Activated T-helper 2 cell treated with anti-CD3 and anti-CD28 coated beads, Interferon-gamma antibody, Interleukin-2, Interleukin-4, amounts not matched to agents 10 μg/mL and 5 μg/mL and 100 μg/mL, durations not matched to agents 14 hours and 24 hours and 36 hours (primary cell): ENCODE measurements at regions of chr1 and their contacts with region 1.

Region 1: DNA sequence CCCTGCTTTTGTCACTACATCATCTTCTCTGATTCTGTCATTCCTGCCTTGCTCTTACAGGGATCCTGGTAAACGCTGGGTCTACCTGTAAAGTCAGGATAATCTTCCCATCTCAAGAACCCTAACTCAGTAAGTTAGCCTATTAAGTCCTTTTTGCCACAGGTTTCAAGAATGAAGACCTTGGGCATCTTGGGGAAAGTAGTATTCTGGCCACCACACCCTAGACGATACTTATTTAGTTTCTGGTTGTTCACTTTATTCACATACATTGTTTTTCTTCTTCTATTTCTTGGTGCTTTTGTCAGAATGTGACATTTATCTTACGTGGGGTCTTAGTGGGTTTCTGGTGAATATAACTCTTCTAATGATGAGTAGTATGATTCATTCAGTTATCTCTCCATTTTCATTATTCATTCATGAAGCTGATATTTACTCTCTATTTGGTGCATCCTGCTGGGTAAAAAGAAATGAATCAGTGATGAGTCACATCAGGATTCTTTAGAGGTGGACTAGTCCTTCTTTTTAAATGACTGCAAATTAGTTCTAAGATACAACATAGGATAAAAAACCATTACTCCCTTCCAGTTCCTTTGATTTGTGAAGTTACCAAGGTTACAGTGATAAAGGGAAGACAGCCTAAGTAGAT is 514.4 kb upstream of the B3GALT2 start:
- DNase-seq: no peak
- H3K4me3 Mint-ChIP-seq: peak overlapping the region; percentile 5
- H3K27ac Mint-ChIP-seq: peak overlapping the region; percentile 72
- H3K4me1 Mint-ChIP-seq: peaks cover 38% of the 10 kb centered on the region
- H3K27me3 Mint-ChIP-seq: no peaks in the 10 kb centered on the region

Region 2: DNA sequence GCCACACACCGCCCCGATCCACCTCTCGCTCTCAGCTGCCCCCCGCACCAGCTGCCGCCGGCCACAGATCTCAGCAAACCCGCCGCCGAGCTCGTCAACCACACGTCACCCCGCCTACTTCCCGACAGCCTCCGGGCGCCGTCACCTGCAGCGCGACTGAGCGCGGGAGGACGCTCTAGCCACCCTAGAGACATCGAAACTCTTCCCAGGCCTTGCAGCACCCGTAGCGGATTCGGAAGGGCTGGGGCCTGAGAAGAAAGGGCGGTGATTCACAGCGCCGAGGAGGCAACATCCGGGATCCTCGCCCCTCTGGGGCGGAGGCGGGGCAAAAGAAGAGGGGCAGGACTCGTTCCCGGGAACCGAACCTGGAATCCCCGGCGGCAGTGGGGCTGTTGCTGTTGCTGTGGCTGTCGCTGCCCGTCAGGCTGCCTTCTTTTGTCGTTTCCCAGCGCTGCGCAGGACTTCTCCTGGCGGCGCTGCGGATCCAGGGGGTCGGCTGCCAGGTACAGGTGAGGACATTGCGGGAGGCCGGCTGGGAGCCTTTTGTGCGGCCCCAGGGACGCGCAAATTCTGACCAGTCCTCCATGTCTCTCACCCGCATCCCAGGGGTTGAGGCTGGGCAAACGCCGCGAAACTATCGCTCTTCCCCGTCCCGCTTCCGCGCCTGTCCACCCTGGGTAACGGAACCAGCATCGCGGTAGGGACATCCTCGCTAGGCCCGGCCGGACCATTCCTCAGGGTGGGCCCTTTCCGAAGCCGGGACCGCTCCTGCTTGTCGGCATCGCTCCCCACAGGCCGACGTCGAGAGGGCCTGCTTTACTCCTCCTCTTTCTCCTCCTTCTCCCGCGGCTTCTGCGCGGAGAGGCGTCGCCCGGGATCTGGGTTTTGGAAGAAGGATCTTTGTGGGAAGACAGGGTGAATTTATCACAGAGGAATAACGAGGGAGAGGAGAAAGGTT is 641.3 kb before region 1 on chr1 and contains the starts of genes RO60 and UCHL5:
- intact Hi-C with region 1: loop called (anchors 1 kb)
- DNase-seq: peak; percentile 95
- H3K4me3 Mint-ChIP-seq: peak within 1 kb of the TSS; percentile 98
- H3K27ac Mint-ChIP-seq: peak within 1 kb of the TSS; percentile 99
- H3K4me1 Mint-ChIP-seq: peaks cover 47% of the 10 kb centered on the region
- H3K27me3 Mint-ChIP-seq: no peaks in the 10 kb centered on the region
- total RNA-seq, gene RO60: 71.4 and 72.7 TPM in 2 replicates
- total RNA-seq, gene UCHL5: 77.6 and 78.5 TPM in 2 replicates

Region 3: DNA sequence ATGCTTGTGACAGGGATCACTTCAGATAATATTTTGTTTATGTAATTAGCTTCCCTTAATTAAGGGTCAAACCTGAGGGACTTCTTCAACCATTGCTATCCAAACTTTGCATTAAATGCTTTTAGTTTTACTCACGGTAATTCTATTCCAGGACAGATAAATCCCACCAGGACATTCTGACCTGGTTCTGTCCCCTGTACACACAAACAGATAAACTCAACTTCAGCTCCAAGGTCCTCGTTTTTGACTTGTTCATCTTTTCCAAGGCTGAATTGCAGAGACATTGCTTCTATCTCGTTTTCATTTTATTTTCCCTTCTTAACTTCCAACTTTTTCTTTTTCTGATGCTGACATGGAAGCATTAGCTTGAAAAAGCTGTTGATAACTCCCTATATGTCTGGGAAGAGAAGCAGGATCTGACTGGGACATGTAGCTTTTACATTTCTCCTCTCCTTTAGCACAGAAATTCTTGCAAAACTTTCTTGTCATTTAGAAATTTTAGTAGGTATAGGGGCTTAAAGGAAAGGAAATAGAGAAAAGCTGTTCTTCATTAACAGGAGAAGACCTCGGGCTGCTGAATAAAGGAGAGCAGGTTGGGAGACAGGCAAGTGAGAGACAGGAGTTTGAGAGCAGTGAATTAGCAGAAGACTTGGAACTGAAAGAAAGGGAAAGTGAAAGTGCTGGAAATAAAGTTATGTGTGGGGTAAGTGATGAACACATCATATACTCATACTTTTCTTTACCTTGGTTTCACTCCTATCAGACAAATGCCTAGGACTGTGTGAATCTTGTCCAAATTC is 282.7 kb before region 1 on chr1:
- intact Hi-C with region 1: loop called (anchors 2 kb)
- DNase-seq: no peak
- H3K4me3 Mint-ChIP-seq: peak overlapping the region; percentile 60
- H3K27ac Mint-ChIP-seq: peak overlapping the region; percentile 54
- H3K4me1 Mint-ChIP-seq: peaks cover 46% of the 10 kb centered on the region
- H3K27me3 Mint-ChIP-seq: no peaks in the 10 kb centered on the region

Region 4: GRCh38 chr1:193448682-193449461 is 252.0 kb before region 1 on chr1:
- intact Hi-C with region 1: no loop called
- DNase-seq: no peak
- H3K4me3 Mint-ChIP-seq: peak overlapping the region; percentile 27
- H3K27ac Mint-ChIP-seq: peak overlapping the region; percentile 59
- H3K4me1 Mint-ChIP-seq: peaks cover 19% of the 10 kb centered on the region
- H3K27me3 Mint-ChIP-seq: no peaks in the 10 kb centered on the region

Region 5: DNA sequence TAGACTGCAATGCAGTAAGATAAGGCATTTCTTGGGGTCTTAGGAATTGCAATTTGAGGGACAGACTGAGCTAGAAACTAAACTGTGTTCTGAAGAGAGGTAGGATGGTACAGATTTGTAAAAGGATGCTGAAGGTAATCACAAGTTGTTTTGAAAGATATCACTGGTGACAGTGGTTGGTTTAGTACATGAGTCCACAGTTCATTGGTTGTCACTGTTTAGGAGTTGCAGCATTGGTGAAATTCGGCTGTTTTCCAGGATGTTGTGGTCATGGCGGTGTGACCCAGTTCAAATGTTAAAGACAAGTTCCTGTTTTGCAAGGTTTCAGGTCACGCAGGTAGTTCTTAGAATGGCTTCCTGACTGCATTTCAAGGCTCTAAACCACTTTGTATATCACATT is 221.6 kb before region 1 on chr1:
- intact Hi-C with region 1: loop called (anchors 1 kb)
- DNase-seq: peak; percentile 83
- H3K4me3 Mint-ChIP-seq: no peak overlapping the region
- H3K27ac Mint-ChIP-seq: peak overlapping the region; percentile 90
- H3K4me1 Mint-ChIP-seq: peaks cover 54% of the 10 kb centered on the region
- H3K27me3 Mint-ChIP-seq: no peaks in the 10 kb centered on the region

Region 6: DNA sequence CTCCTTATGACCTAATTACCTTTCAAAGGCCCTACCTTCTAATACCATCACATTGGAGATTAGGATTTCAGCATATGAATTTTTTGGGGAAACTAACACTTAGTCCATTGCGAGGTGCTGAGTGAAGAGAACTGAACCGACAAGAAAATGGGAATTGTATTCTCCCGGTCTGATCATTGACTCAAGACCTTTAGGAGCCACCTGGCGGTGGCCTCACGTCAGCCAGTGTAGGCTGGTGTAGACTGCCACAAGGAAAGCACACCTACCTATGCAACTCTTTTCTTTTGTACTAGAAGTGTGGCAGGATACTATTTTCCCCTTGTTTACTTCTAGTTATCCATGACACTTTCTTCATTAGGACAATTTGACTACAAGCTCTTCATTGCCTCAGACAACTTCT is 180.9 kb before region 1 on chr1:
- intact Hi-C with region 1: no loop called
- DNase-seq: no peak
- H3K4me3 Mint-ChIP-seq: no peak overlapping the region
- H3K27ac Mint-ChIP-seq: no peak overlapping the region
- H3K4me1 Mint-ChIP-seq: peaks cover 12% of the 10 kb centered on the region
- H3K27me3 Mint-ChIP-seq: no peaks in the 10 kb centered on the region

Region 7: DNA sequence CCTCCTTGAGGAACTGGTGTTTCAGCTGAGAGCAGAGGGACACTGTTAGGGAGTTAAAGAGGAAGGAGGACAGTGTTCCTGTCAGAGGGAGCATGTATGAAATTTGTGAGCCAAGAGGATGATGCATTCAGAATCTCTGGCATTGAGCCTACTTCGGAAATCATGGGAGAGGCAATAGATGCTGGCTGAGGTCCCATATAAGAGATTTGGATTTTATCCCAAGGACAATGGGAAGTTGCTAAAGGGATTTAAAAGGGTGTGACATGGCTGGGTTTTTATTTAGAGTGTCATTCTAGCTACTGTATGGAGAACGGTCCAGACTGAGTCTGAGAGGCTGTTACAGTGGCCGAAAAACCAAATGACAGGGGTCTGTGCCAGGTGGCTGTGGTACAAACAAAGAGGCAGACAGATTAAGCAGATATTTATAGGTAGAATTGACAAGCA is 111.2 kb before region 1 on chr1:
- intact Hi-C with region 1: loop called (anchors 5 kb)
- DNase-seq: no peak
- H3K4me3 Mint-ChIP-seq: no peak overlapping the region
- H3K27ac Mint-ChIP-seq: no peak overlapping the region
- H3K4me1 Mint-ChIP-seq: peaks cover 21% of the 10 kb centered on the region
- H3K27me3 Mint-ChIP-seq: no peaks in the 10 kb centered on the region

Region 8: DNA sequence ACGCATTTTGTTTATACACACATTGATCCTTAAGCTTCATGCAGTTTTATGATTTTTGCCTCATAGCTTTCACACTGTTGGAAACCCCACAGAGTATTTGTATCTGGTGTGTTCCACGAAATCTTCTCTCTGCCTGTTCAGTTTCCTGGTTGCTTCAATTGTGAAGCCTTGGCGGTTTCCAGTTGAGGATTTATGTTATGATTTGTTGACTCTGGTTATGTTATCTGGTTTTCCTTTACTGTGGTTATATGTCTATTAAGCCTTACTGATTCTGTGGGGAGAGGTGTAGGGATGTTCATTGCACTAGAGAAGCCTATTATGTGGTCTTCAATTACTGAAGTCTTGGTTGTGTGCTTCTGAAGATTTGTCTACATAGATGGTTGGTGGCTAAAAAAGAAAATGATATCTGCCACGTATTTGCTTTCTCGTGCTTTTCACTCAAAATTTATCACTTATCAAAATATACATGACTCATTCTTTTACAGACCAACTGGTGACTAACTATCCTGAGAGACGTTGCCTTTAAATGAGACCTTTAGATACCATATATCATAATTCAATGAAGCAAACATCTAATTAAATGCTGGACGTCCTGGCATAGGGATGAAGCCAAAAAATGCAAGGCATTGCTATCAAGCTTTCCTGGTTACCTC is 26.4 kb before region 1 on chr1:
- intact Hi-C with region 1: loop called (anchors 2 kb)
- DNase-seq: no peak
- H3K4me3 Mint-ChIP-seq: no peak overlapping the region
- H3K27ac Mint-ChIP-seq: peak overlapping the region; percentile 61
- H3K4me1 Mint-ChIP-seq: peaks cover 22% of the 10 kb centered on the region
- H3K27me3 Mint-ChIP-seq: no peaks in the 10 kb centered on the region

Region 9: DNA sequence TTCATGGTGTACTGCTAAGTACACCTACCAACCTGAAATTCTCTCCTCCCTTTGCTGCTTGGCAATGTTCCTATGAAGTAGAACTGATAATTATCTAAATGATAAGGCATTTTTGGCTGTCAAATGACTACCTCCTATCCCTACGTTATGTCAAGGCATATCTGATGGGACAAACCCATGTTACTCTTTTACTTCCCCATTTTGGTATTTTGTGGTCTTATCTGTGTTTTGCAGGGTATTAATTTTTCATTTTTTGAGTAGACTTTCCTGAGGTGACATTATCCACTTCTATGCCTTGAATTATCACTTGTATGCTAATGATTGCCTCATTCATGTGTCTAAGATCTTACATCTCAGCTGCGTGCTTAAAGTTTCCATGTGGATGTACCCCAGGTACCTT is 14.8 kb before region 1 on chr1:
- intact Hi-C with region 1: no loop called
- DNase-seq: no peak
- H3K4me3 Mint-ChIP-seq: no peak overlapping the region
- H3K27ac Mint-ChIP-seq: no peak overlapping the region
- H3K4me1 Mint-ChIP-seq: peaks cover 9% of the 10 kb centered on the region
- H3K27me3 Mint-ChIP-seq: no peaks in the 10 kb centered on the region

Region 10: GRCh38 chr1:193787061-193787460 is 86.2 kb after region 1 on chr1:
- intact Hi-C with region 1: no loop called
- DNase-seq: no peak
- H3K4me3 Mint-ChIP-seq: no peak overlapping the region
- H3K27ac Mint-ChIP-seq: no peak overlapping the region
- H3K4me1 Mint-ChIP-seq: no peaks in the 10 kb centered on the region
- H3K27me3 Mint-ChIP-seq: no peaks in the 10 kb centered on the region